Motor neuron (in vitro differentiated cells): ENCODE measurements at regions of chr12 and their contacts with region 1.

Region 1: DNA sequence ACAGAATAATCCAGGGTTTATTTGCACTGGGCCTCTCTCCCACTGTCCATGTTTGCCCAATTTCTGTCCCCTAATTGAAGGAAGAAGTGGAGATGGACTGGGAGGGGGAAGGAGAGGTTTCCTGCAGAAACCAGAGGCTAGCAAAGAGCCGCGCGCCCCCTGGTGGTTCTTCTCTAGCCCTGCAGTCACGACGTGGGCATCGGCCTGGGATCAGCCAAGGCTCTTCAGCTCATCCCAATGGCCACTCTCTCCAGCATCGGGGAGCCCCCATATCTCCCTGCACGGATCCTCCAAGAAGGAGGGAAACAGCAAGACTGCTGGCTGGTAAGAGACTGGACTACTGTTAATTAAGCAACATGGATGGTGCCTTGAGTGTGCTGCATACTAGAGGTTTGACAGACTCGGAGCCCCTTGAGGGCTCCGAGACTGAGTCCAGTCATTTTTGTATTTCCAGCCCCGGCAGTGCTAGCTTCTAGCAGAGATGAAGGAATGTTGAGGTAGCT is 18.7 kb downstream of the ZBTB39 start:
- ATAC-seq: peak; percentile 82 to 97 (median 88)
- H3K4me3 ChIP-seq: no peak overlapping the region
- H3K27ac ChIP-seq: no peak overlapping the region
- H3K4me1 ChIP-seq: no peaks in the 10 kb centered on the region

Region 2: DNA sequence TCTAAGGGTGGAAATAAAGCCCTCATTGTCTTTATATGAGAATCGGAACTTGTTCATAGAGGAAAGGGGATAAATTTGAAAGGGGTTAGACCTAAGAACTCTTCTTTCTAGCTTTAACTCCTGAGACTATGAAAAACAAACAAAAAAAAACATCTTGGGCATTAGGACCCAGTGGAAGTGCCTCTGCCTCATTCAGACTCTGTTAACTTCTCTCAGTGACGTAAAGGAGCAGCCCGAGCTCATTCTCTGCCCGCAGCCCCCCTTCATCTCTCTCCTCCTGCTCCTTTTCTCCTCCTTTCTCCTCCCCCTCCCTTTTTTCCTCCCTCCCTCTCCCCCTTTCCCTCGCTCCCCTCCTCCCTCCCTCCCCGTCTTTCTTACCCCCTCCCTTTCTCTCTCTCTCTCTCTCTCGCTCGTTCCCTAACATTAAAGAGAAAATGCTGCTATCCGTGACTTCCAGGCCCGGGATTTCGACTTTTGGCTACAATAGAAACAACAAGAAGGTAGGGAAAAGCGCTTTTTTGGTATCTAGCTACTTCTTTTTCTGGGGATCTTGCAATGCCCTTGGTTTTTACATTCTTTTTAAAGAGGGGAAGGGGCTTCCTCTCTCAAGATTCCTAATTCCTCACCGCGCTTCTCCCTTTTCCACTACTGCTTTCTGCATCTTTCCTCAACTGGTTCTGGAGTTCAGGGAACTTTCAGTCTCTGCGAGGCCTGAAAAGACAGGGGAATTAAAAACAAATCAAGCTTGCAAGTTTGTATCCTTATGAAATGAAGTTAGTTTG is 465.8 kb before region 1 on chr12 and contains the start of gene RBMS2:
- in situ Hi-C with region 1: loop called in 1 of 9 experiments (anchors 25 kb)
- ATAC-seq: peak; percentile 92 to 100 (median 99)
- H3K4me3 ChIP-seq: peak within 1 kb of the TSS; percentile 40 to 52 (median 50)
- H3K27ac ChIP-seq: peak within 1 kb of the TSS; percentile 40 to 43
- H3K4me1 ChIP-seq: peaks cover 8 to 9% of the 10 kb centered on the region in 2 donors
- total RNA-seq, gene RBMS2: 2.6 to 12.9 (median 6.0) TPM

Region 3: DNA sequence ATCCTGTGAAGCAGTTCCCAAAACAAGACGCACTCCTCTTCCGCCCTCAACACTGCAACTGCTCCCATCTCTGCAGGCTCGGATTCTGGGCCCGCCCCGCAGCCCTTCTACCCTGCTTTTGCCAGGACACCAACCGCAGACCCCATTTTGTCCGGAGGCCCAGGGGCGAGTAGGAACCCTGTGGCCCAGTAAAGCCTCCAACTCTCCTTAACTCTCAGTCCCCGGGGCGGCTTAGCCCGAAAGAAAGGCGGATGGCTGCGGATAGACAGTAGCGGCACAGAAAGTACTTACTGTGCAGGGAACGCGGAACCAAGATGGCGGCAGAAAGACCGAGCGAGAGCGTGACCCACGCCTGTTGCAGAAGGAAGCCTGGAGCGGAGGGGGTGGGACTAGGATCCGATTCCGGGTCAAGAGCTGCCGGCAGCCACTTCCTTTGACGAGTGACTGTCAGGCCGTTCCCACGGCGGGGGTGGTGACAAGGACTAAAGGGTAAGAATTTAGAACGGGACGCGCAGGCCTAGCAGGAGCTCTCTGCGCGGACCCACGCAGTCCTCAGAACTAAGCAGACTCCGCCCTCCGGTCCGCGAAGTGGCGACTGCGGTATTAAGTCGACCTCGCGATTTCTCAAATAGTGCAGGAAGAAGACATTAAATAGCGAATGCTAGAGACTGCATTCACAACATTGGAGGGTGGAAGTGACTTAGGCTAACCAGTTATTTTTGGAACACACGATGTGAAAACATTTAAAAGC is 262.5 kb before region 1 on chr12 and contains the start of gene NACA:
- in situ Hi-C with region 1: no loop called
- ATAC-seq: peak; percentile 92 to 98 (median 96)
- H3K4me3 ChIP-seq: peak within 1 kb of the TSS; percentile 48 to 78 (median 66)
- H3K27ac ChIP-seq: peak within 1 kb of the TSS; percentile 71 to 93
- H3K4me1 ChIP-seq: peaks cover 18 to 19% of the 10 kb centered on the region in 2 donors
- total RNA-seq, gene NACA: 1,543 to 3,132 (median 1,968) TPM

Region 4: GRCh38 chr12:56751712-56752598 is 235.6 kb before region 1 on chr12 and contains the start of gene PRIM1:
- in situ Hi-C with region 1: loop called in 3 of 9 experiments (anchors 5 to 25 kb)
- ATAC-seq: peak; percentile 91 to 96 (median 94)
- H3K4me3 ChIP-seq: peak within 1 kb of the TSS; percentile 64 to 92 (median 73)
- H3K27ac ChIP-seq: peak within 1 kb of the TSS; percentile 8 to 41
- H3K4me1 ChIP-seq: peaks cover 5% of the 10 kb centered on the region in 2 donors
- total RNA-seq, gene PRIM1: 2.7 to 33.1 (median 18.7) TPM

Region 5: GRCh38 chr12:56759263-56759908 is 228.2 kb before region 1 on chr12:
- in situ Hi-C with region 1: loop called in 5 of 9 experiments (anchors 5 to 25 kb)
- ATAC-seq: no peak
- H3K4me3 ChIP-seq: no peak overlapping the region
- H3K27ac ChIP-seq: no peak overlapping the region
- H3K4me1 ChIP-seq: no peaks in the 10 kb centered on the region

Region 6: GRCh38 chr12:56766535-56766934 is 221.1 kb before region 1 on chr12:
- in situ Hi-C with region 1: loop called in 3 of 9 experiments (anchors 10 to 25 kb)
- ATAC-seq: no peak
- H3K4me3 ChIP-seq: no peak overlapping the region
- H3K27ac ChIP-seq: no peak overlapping the region
- H3K4me1 ChIP-seq: no peaks in the 10 kb centered on the region

Region 7: DNA sequence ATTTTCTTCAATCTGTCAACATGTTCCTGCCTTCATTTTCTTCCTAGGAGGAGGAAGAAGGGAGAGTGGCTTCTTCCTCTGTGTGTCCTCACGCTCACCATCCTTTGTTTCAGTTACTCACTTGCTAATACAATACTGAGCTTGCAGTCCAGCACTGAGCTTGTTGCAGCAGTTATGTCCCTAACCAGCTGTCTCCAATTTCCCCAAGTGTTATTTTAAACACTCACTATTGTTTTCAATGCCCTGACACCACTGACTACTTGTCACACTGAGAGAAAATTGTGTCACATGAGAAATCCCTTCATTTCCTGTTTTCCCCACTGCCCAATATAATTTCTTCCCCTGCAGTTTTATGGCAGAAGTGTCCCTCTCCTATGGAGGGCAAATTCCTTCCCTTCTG is 171.1 kb before region 1 on chr12:
- in situ Hi-C with region 1: no loop called
- ATAC-seq: peak in 3 of 8 experiments; percentile 36 to 77 (median 71)
- H3K4me3 ChIP-seq: no peak overlapping the region
- H3K27ac ChIP-seq: no peak overlapping the region
- H3K4me1 ChIP-seq: peaks cover 3 to 7% of the 10 kb centered on the region in 2 donors

Region 8: DNA sequence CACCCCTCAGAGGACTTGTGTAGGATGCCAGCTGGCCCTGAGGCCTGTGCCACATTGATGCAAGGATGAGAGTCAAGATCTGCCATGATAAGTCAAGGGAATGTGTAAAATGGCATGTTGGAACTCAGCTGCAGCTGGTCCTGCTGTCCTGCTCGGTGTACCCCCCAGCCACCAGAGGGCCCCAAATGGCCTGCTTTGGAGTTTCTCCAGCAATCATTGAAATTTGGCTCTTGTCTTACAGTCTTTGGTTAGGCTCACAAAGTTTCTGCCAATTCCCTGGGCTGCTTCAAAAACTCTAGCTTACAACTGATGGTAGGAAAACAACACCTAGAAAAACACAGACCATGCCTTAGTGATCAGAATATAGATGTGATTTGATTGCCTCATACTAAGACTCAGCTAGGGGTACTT is 147.7 kb before region 1 on chr12:
- in situ Hi-C with region 1: loop called in 1 of 9 experiments (anchors 10 kb)
- ATAC-seq: peak in 3 of 8 experiments; percentile 70 to 83 (median 72)
- H3K4me3 ChIP-seq: no peak overlapping the region
- H3K27ac ChIP-seq: no peak overlapping the region
- H3K4me1 ChIP-seq: no peaks in the 10 kb centered on the region

Region 9: DNA sequence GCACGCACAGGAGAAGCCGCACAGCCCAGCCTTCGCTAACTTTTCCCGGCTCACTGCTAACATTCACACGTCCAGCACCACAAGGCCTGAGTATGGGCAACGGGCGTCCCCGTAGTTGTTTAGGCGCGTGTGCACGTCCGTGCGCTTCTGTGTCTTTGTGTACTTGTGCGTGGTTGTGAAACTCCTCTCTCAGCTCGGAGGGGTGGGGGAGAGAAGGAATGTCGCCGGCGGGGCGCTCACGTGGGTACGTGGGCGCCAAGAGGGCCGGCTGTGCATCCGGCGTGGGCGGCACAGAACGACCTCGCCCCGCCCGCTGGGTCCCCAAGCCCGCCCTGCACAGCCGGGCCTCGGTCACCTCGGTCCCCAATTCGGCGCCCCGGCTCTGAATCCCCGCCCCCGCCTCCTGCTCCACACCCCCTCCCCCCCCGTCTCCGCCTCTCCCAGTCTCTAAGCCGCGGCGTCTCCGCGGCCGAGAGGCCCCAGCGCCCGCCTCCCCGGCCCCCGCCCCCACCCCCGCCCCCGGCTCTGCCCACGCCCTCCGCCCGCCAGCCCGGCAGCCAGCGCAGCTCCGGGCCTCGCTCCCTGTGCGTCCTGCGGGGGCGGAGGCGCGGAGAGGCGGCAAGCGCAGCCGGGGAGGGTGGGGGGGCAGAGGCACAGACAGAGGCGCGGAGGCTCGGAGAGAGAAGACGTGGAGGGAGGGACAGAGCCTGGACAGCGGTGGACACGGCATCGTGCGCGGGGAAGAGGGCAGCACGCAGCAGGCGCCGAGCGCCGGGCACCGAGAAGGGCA is 101.1 kb after region 1 on chr12 and contains the start of gene NAB2:
- in situ Hi-C with region 1: no loop called
- ATAC-seq: peak; percentile 45 to 82 (median 73)
- H3K4me3 ChIP-seq: peak within 1 kb of the TSS; percentile 53 to 94 (median 69)
- H3K27ac ChIP-seq: peak within 1 kb of the TSS; percentile 66 to 87
- H3K4me1 ChIP-seq: peaks cover 22 to 26% of the 10 kb centered on the region in 2 donors
- total RNA-seq, gene NAB2: 13.4 to 41.1 (median 24.0) TPM

Region 10: DNA sequence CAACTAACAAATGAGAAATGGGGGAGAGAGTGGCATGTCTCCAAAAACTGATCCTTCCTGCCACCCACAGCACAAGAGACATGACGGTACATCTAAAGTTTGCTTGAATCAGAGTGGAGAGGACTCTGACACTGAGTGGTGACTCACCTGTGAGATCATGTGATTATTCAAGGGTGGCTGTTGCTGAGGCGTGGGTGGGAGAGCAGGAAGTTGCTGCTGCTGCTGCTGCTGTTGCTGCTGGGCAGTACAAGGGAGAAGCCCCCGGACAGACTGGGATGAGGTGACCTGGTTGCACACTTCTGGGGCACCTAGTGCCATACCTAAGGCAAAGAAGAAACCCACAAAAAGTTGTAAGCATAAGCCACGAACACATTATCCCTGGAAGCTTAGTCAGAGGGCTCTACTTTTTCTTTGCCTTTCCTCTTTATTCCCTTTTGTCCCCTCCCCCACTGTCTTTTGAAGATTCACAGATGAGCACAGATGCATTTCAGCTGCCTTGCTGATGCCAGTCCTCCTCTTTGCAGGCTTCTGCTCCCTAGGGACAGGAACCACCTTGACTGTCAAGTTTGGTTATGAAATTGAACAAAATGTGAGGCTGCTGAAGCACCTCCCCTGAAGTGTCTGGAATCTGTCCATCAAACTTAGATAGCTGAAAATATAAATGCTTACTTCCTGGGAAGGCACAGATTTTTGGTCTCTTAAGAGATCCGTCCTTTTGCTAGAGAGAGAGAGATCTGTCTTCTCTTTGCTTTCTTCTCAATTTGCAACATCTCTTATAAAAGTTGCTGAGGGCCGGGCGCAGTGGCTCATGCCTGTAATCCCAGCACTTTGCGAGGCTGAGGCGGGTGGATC is 292.8 kb after region 1 on chr12:
- in situ Hi-C with region 1: no loop called
- ATAC-seq: peak; percentile 24 to 99 (median 99)
- H3K4me3 ChIP-seq: no peak overlapping the region
- H3K27ac ChIP-seq: no peak overlapping the region
- H3K4me1 ChIP-seq: no peaks in the 10 kb centered on the region